Mammary epithelial cell (primary cell): ENCODE measurements at regions of chr2 and their contacts with region 1.

Region 1: DNA sequence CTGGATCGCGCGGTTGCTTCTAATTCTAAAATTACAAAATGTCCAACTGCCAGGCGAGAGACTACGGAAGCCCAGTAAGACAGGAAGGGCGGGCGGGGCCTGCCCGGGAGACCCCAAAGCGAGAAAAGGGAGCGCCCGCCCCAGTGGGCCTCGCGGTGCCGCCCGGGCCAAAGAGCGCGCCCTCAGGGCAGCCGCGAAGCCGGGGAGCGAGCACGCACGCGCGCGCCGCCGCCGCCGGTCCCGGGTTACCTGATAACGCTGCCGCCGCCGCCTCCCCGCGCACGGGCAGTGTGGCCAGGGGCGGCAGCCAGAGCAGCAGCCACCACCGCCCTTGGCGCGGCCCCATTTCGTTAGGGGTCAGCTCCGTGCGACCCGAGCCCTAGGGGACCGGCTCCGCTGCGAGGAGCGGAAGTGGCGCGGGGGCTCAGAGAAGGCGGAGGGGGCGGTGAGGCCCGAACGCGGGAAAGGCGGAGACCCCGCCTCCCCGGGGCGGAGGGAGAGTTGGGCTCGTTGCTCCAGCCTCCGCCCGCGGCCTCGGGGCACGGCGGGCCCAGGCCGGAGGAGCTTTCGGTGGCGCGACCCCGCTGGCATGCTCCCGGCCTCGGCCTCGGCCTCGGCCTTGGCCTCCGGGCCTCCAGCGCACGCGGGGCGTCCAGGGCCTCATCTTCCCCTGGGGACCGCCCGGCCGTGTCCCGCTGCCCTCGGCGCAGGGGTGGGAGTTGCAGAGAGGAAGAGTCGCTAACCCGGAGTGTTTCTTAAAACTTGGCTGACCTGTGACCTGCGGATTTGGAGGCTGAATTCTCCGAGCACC is at the start of gene NEMP2:
- DNase-seq: peak; percentile 69
- H3K4me3 ChIP-seq: peak within 1 kb of the TSS; percentile 75 to 91 (median 86)
- H3K27ac ChIP-seq: peak within 1 kb of the TSS; percentile 78
- H3K4me1 ChIP-seq: peaks cover 22% of the 10 kb centered on the region
- H3K27me3 ChIP-seq: no peaks in the 10 kb centered on the region
- CTCF ChIP-seq: no peak
- total RNA-seq, gene NEMP2: 5.0 to 6.0 TPM

Region 2: GRCh38 chr2:190343500-190344275 is 190.8 kb before region 1 on chr2 and contains the start of gene INPP1:
- CTCF ChIA-PET with region 1: no interaction called
- dilution Hi-C with region 1: no loop called
- in situ Hi-C with region 1: no loop called
- intact Hi-C with region 1: no loop called
- DNase-seq: peak; percentile 59
- H3K4me3 ChIP-seq: peak within 1 kb of the TSS; percentile 68 to 82 (median 73)
- H3K27ac ChIP-seq: peak within 1 kb of the TSS; percentile 75
- H3K4me1 ChIP-seq: peaks cover 12% of the 10 kb centered on the region
- H3K27me3 ChIP-seq: no peaks in the 10 kb centered on the region
- CTCF ChIP-seq: no peak
- total RNA-seq, gene INPP1: 13.0 to 23.8 TPM

Region 3: GRCh38 chr2:190432567-190433231 is 101.8 kb before region 1 on chr2:
- CTCF ChIA-PET with region 1: no interaction called
- dilution Hi-C with region 1: no loop called
- in situ Hi-C with region 1: no loop called
- intact Hi-C with region 1: no loop called
- DNase-seq: no peak
- H3K4me3 ChIP-seq: no peak overlapping the region
- H3K27ac ChIP-seq: no peak overlapping the region
- H3K4me1 ChIP-seq: no peaks in the 10 kb centered on the region
- H3K27me3 ChIP-seq: no peaks in the 10 kb centered on the region
- CTCF ChIP-seq: no peak

Region 4: GRCh38 chr2:190578158-190579057 is 43.9 kb after region 1 on chr2:
- CTCF ChIA-PET with region 1: no interaction called
- dilution Hi-C with region 1: no loop called
- in situ Hi-C with region 1: no loop called
- intact Hi-C with region 1: loop called (anchors 2 kb)
- DNase-seq: peak; percentile 81
- H3K4me3 ChIP-seq: peak overlapping the region in 1 of 3 experiments; percentile 12
- H3K27ac ChIP-seq: peak overlapping the region; percentile 90
- H3K4me1 ChIP-seq: peaks cover 39% of the 10 kb centered on the region
- H3K27me3 ChIP-seq: no peaks in the 10 kb centered on the region
- CTCF ChIP-seq: no peak

Region 5: GRCh38 chr2:190636373-190636772 is 101.9 kb after region 1 on chr2:
- CTCF ChIA-PET with region 1: no interaction called
- dilution Hi-C with region 1: no loop called
- in situ Hi-C with region 1: loop called in 1 of 2 experiments (anchors 10 kb)
- intact Hi-C with region 1: no loop called
- DNase-seq: peak; percentile 58
- H3K4me3 ChIP-seq: no peak overlapping the region
- H3K27ac ChIP-seq: no peak overlapping the region
- H3K4me1 ChIP-seq: peaks cover 27% of the 10 kb centered on the region
- H3K27me3 ChIP-seq: no peaks in the 10 kb centered on the region
- CTCF ChIP-seq: no peak

Region 6: GRCh38 chr2:190759749-190760213 is 225.3 kb after region 1 on chr2:
- CTCF ChIA-PET with region 1: no interaction called
- dilution Hi-C with region 1: no loop called
- in situ Hi-C with region 1: no loop called
- intact Hi-C with region 1: loop called (anchors 10 kb)
- DNase-seq: peak; percentile 77
- H3K4me3 ChIP-seq: no peak overlapping the region
- H3K27ac ChIP-seq: no peak overlapping the region
- H3K4me1 ChIP-seq: peaks cover 11% of the 10 kb centered on the region
- H3K27me3 ChIP-seq: no peaks in the 10 kb centered on the region
- CTCF ChIP-seq: no peak